ENCODE measurements at regions of chr2 and their contacts with region 1.

Region 1: DNA sequence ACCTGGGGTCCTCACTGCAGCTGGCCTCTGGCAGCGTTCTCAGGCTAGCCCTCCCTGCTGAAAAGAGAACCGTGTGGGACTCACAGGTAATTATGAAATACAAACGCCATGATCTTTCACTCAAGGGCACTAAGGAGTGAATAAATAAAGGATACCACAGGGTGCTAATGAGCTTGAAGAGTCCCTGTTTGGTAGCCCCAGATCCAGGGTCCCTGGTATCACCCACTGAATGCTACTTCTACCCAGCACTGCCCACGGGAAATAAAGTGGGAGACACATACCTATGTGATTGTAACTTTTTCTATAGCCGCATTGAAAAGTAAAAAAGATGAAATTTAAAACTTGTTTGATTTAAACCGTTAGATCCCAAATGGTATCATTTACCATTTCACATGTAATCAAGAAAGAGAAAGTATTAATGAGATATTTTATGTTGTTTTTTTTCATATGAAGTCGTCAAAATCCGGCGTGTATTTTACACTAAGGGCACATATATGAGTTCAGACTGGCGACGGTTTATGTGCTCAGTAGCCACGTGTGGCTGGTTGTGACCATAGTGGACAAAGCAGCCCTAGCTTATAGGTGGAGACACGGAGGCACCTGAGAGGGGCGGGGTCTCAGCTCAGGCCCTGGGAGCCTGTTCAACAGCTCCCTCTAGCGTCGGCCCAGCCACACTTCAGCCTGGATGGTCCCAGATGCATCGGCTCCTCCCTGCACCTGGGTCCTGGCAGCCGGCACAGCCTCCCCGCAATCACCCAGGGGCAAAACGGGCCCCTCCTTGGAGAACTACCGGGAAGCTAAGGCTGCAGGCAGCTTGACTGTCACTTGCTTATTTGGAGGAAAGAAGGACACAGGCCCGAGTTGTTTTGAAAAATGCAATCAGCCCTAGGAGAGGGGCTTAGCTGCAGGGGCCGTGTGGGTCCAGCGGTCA is 39.2 kb downstream of the ODC1 start:
- DNase-seq: peak; percentile 10
- H3K4me3 ChIP-seq: peak overlapping the region in 3 of 4 donors; percentile 18 to 52 (median 29)
- H3K27ac ChIP-seq: peak overlapping the region; percentile 80 to 90 (median 88)
- H3K4me1 ChIP-seq: peaks cover 28 to 63% (median 52%) of the 10 kb centered on the region in 3 donors
- H3K27me3 ChIP-seq: no peaks in the 10 kb centered on the region
- CTCF ChIP-seq: peak; percentile 93 to 98 (median 97)
- POLR2A ChIP-seq: no peak

Region 2: DNA sequence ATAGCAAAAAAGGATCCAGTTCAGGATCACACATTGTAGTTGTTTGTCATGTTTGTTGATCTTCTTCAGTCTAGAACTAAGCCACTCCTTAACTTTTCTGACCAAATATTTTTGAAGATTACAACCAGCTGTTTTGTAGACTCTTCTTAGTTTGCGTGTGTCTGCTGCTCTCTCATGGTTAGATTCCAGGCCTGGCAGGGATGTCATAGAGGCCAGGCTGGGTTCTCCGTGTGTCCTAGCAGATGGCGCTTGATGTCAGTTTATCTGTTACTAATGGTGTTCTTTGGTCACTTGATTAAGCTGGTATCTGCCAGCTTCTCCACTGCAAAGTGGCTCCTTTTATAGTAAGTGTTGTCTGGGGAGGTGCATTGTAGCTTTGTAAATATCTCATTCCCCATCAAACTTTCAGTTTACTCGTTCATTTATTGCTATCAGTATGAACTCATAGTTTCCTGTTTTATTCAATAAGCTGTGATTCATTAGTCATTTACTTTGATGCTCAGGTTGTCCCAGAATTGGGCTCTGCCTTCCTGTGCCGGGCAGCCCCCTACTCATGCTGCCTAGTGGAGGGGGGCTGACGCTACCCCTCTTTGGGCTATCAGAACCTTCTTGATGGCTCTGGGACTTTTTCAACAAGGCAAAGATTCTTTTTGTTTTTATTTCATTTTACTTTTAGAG is 415.3 kb before region 1 on chr2:
- intact Hi-C with region 1: no loop called
- DNase-seq: no peak
- H3K4me3 ChIP-seq: no peak overlapping the region
- H3K27ac ChIP-seq: peak overlapping the region in 3 of 4 donors; percentile 17 to 49 (median 22)
- H3K4me1 ChIP-seq: peaks cover 9 to 42% (median 27%) of the 10 kb centered on the region in 3 donors
- H3K27me3 ChIP-seq: no peaks in the 10 kb centered on the region
- CTCF ChIP-seq: no peak
- POLR2A ChIP-seq: no peak

Region 3: GRCh38 chr2:10133007-10133647 is 275.8 kb before region 1 on chr2:
- intact Hi-C with region 1: loop called (anchors 5 kb)
- DNase-seq: no peak
- H3K4me3 ChIP-seq: no peak overlapping the region
- H3K27ac ChIP-seq: no peak overlapping the region
- H3K4me1 ChIP-seq: peaks cover 0 to 14% (median 5%) of the 10 kb centered on the region in 3 donors
- H3K27me3 ChIP-seq: no peaks in the 10 kb centered on the region
- CTCF ChIP-seq: no peak
- POLR2A ChIP-seq: no peak

Region 4: DNA sequence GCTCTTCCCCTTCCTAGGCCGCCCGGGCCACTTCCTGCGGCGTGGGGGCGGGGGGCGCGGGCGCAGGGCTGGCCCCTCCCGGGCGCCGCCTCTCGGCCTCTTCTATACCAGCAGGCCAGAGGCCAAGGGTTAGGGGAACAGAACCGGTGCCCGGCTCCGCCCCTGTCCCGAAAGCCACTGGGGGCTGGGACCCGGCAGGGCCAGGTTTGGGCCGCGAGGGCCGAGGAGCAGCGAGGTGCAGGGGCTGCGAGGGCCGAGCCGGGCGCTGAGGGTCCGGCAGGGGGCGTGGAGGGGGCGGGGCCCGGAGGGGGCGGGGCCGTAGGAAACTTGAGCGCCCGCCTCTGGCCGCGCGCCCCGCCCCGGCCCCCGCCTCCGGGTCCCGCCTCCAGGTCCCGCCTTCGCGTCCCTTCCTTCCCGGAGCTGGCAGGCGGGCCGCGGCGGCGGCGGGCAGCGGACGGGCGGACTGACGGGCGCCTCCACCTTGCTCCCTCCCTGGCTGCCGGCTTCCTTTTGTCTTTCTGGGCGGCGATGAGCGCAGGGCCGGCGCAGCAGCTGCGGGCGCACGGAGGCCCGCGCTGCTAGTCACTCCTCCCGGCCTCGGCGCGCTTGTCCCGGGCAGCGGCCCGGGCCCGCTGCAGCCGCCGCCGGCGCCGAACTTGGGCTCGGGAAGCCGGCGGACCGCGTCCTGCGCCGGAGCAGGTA is 106.3 kb before region 1 on chr2 and contains the start of gene HPCAL1:
- intact Hi-C with region 1: loop called (anchors 5 kb)
- DNase-seq: peak; percentile 49
- H3K4me3 ChIP-seq: peak within 1 kb of the TSS; percentile 67 to 90 (median 80)
- H3K27ac ChIP-seq: peak within 1 kb of the TSS; percentile 76 to 91 (median 82)
- H3K4me1 ChIP-seq: peaks cover 13 to 61% (median 15%) of the 10 kb centered on the region in 3 donors
- H3K27me3 ChIP-seq: peaks cover 0 to 7% (median 0%) of the 10 kb centered on the region in 4 donors
- CTCF ChIP-seq: peak; percentile 40 to 74 (median 62)
- POLR2A ChIP-seq: peak in 3 of 4 donors; percentile 83 to 98 (median 93)
- total RNA-seq, gene HPCAL1: 13.2 to 26.4 (median 20.5) TPM